ENCODE measurements at regions of chr17 and their contacts with region 1.

Region 1: DNA sequence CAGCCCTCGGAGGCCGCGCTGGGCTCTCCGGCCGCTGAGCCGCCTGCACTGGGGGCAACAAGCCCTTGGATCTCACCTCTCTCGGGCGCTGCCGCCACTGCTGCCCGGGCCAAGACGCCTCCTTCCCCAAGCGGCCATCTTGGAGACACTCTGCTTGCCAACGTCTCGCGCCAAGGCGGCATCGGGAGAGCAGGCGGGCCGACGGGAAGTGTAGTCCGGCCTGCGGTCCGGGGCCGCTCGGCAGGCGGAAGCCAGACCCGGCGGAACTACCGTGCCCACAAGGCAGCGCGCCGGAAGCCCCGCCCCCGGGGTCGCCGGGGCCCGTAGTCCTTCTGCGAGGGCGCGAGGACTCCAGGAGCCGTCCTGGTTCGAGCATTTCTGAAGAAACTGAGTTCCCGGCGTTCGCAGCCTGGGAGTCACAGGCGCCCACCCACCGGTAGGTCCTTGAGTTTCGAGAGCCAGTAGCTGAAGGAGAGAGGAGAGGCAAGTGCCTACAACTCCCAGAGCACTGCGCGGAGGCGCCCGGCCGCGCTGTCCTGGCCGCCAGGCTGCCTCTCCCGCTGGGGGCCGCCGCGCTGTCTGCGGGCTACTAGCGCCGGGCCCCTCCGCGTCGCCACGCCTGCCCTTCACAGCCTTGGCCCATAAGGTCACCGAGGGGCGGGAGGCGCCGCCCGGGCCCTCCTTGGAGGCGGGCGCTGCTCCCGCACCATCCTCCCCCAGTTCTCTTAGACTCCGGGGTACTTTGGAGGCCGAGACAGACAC is at the start of gene TMEM11:
- DNase-seq: peak; percentile 91 to 97 (median 95)
- ATAC-seq: peak; percentile 96
- H3K4me3 ChIP-seq: peak within 1 kb of the TSS; percentile 93
- H3K4me3 Mint-ChIP-seq: peak within 1 kb of the TSS; percentile 90 to 97 (median 92)
- H3K27ac ChIP-seq: peak within 1 kb of the TSS; percentile 97
- H3K27ac Mint-ChIP-seq: peak within 1 kb of the TSS; percentile 84 to 96 (median 92)
- H3K4me1 ChIP-seq: peaks cover 25 to 32% of the 10 kb centered on the region in 2 donors
- H3K4me1 Mint-ChIP-seq: peaks cover 43 to 74% (median 53%) of the 10 kb centered on the region in 7 donors
- H3K27me3 ChIP-seq: no peaks in the 10 kb centered on the region
- H3K27me3 Mint-ChIP-seq: no peaks in the 10 kb centered on the region
- total RNA-seq, gene TMEM11: 11.7 to 22.9 (median 19.3) TPM

Region 2: GRCh38 chr17:21119247-21119918 is 94.8 kb before region 1 on chr17:
- CTCF ChIA-PET with region 1: interaction called, 3 read pairs
- POLR2A ChIA-PET with region 1: no interaction called
- intact Hi-C with region 1: loop called in 1 of 2 experiments (anchors 2 kb)
- DNase-seq: peak; percentile 36 to 76 (median 62)
- ATAC-seq: peak; percentile 91
- H3K4me3 ChIP-seq: no peak overlapping the region
- H3K4me3 Mint-ChIP-seq: peak overlapping the region in 7 of 10 donors; percentile 1 to 72 (median 40)
- H3K27ac ChIP-seq: no peak overlapping the region
- H3K27ac Mint-ChIP-seq: peak overlapping the region in 3 of 9 donors; percentile 6 to 47 (median 35)
- H3K4me1 ChIP-seq: peaks cover 0 to 5% of the 10 kb centered on the region in 2 donors
- H3K4me1 Mint-ChIP-seq: peaks cover 6 to 15% (median 10%) of the 10 kb centered on the region in 7 donors
- H3K27me3 ChIP-seq: no peaks in the 10 kb centered on the region
- H3K27me3 Mint-ChIP-seq: peaks cover 0 to 16% (median 5%) of the 10 kb centered on the region in 5 donors

Region 3: GRCh38 chr17:21171309-21171922 is 42.8 kb before region 1 on chr17:
- CTCF ChIA-PET with region 1: no interaction called
- POLR2A ChIA-PET with region 1: no interaction called
- intact Hi-C with region 1: no loop called
- DNase-seq: no peak
- ATAC-seq: no peak
- H3K4me3 ChIP-seq: no peak overlapping the region
- H3K4me3 Mint-ChIP-seq: no peak overlapping the region
- H3K27ac ChIP-seq: no peak overlapping the region
- H3K27ac Mint-ChIP-seq: peak overlapping the region in 4 of 9 donors; percentile 18 to 60 (median 38)
- H3K4me1 ChIP-seq: no peaks in the 10 kb centered on the region
- H3K4me1 Mint-ChIP-seq: peaks cover 0 to 35% (median 10%) of the 10 kb centered on the region in 7 donors
- H3K27me3 ChIP-seq: no peaks in the 10 kb centered on the region
- H3K27me3 Mint-ChIP-seq: no peaks in the 10 kb centered on the region

Region 4: GRCh38 chr17:21275579-21276263 is 61.5 kb after region 1 on chr17:
- CTCF ChIA-PET with region 1: interaction called, 4 read pairs
- POLR2A ChIA-PET with region 1: interaction called, 6 read pairs
- intact Hi-C with region 1: loop called in 1 of 2 experiments (anchors 1 kb)
- DNase-seq: peak; percentile 78 to 99 (median 86)
- ATAC-seq: peak; percentile 93
- H3K4me3 ChIP-seq: peak overlapping the region; percentile 71
- H3K4me3 Mint-ChIP-seq: peak overlapping the region; percentile 80 to 99 (median 94)
- H3K27ac ChIP-seq: peak overlapping the region; percentile 91
- H3K27ac Mint-ChIP-seq: peak overlapping the region; percentile 73 to 96 (median 92)
- H3K4me1 ChIP-seq: peaks cover 24 to 40% of the 10 kb centered on the region in 2 donors
- H3K4me1 Mint-ChIP-seq: peaks cover 34 to 52% (median 49%) of the 10 kb centered on the region in 7 donors
- H3K27me3 ChIP-seq: no peaks in the 10 kb centered on the region
- H3K27me3 Mint-ChIP-seq: no peaks in the 10 kb centered on the region

Region 5: GRCh38 chr17:21318439-21318838 is 104.2 kb after region 1 on chr17:
- CTCF ChIA-PET with region 1: no interaction called
- POLR2A ChIA-PET with region 1: no interaction called
- intact Hi-C with region 1: loop called (anchors 1 kb)
- DNase-seq: no peak
- ATAC-seq: no peak
- H3K4me3 ChIP-seq: no peak overlapping the region
- H3K4me3 Mint-ChIP-seq: no peak overlapping the region
- H3K27ac ChIP-seq: no peak overlapping the region
- H3K27ac Mint-ChIP-seq: no peak overlapping the region
- H3K4me1 ChIP-seq: no peaks in the 10 kb centered on the region
- H3K4me1 Mint-ChIP-seq: peaks cover 0 to 7% (median 6%) of the 10 kb centered on the region in 7 donors
- H3K27me3 ChIP-seq: no peaks in the 10 kb centered on the region
- H3K27me3 Mint-ChIP-seq: peaks cover 0 to 5% (median 5%) of the 10 kb centered on the region in 5 donors

Region 6: DNA sequence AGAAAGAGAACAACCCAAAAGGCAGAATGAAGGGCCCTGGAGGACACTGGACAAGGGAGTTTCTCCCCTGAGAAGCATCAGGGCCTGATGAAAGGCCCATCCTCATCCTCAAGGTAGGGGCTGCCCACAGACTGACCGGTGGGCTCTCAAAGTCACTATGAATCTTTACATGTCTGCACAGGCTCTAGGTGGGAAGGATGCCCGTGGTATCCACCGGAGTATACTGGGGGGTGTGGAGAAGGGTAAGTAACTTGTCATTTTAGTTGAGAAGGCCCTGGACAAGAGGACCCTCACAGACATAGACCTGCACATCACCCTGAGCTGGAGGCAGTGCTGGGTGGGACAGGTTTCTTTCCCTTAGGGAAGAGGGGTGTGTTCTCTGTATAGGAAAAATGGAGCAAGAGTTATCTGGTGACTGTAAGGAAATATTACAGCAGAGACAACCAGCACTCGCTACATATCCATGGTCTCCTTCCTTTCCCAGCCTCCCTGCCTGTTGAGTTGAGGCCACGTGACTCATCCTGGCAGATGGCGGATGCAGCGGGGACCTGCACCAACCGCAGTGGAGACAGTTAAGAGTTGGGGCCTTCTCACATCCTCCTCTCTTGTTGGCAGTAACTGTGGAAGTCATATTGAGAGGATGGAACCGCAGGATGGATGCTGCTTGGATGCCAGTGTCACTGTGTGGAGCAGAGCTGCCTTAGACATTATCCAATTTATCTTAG is 116.4 kb after region 1 on chr17:
- CTCF ChIA-PET with region 1: no interaction called
- POLR2A ChIA-PET with region 1: no interaction called
- intact Hi-C with region 1: no loop called
- DNase-seq: no peak
- ATAC-seq: no peak
- H3K4me3 ChIP-seq: no peak overlapping the region
- H3K4me3 Mint-ChIP-seq: no peak overlapping the region
- H3K27ac ChIP-seq: no peak overlapping the region
- H3K27ac Mint-ChIP-seq: no peak overlapping the region
- H3K4me1 ChIP-seq: no peaks in the 10 kb centered on the region
- H3K4me1 Mint-ChIP-seq: peaks cover 0 to 2% (median 0%) of the 10 kb centered on the region in 7 donors
- H3K27me3 ChIP-seq: no peaks in the 10 kb centered on the region
- H3K27me3 Mint-ChIP-seq: peaks cover 0 to 12% (median 0%) of the 10 kb centered on the region in 5 donors